Activated CD4-positive, alpha-beta T cell treated with anti-CD3 and anti-CD28 coated beads for 36 hours (primary cell): ENCODE measurements at regions of chr6 and their contacts with region 1.

Region 1: DNA sequence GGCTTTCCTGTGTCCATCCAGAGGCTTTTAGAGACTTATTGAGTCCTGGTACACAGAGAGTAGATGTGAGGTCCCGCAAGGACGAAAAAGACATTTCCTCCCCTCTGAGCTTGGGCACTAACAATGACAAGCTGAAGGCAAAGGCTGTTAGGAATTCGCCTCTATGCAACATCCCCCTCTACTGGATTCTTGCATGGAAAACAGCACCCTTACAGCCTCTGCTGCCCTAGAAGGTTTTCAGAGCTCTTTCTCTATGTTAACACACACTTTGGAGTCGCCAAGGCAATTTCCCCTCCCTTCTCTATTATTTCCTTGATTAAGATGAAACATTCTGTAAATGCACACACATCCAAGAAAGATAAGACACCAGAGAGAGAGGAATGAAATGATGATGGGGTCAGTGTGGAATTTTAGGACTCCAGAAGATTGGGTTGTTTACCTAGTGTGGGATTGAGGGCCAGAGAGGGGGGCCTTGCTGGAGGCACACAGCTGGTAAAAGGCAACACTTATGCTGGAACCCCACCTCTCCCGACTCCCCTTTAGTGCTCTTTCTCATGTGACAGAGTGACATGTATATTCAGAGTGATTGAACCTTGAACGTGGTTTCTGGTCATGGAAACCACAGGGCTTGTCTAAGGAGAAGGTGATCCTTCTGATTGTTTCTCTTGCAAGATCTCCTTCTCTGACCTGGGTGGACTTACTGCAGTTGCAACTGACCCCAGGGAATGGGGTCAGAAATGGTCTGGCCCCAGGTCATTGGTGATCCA is 300.7 kb downstream of the CLIC5 start:
- DNase-seq: peak; percentile 57
- ATAC-seq: peak; percentile 43
- H3K4me3 Mint-ChIP-seq: peak overlapping the region; percentile 24
- H3K27ac Mint-ChIP-seq: peak overlapping the region; percentile 89
- H3K4me1 Mint-ChIP-seq: peaks cover 48% of the 10 kb centered on the region
- H3K27me3 Mint-ChIP-seq: peaks cover 2% of the 10 kb centered on the region

Region 2: GRCh38 chr6:44642870-44643529 is 1071.9 kb before region 1 on chr6:
- CTCF ChIA-PET with region 1: no interaction called
- POLR2A ChIA-PET with region 1: no interaction called
- intact Hi-C with region 1: loop called (anchors 1 to 5 kb)
- DNase-seq: peak; percentile 85
- ATAC-seq: peak; percentile 87
- H3K4me3 Mint-ChIP-seq: peak overlapping the region; percentile 21
- H3K27ac Mint-ChIP-seq: peak overlapping the region; percentile 93
- H3K4me1 Mint-ChIP-seq: peaks cover 38% of the 10 kb centered on the region
- H3K27me3 Mint-ChIP-seq: peaks cover 2% of the 10 kb centered on the region

Region 3: DNA sequence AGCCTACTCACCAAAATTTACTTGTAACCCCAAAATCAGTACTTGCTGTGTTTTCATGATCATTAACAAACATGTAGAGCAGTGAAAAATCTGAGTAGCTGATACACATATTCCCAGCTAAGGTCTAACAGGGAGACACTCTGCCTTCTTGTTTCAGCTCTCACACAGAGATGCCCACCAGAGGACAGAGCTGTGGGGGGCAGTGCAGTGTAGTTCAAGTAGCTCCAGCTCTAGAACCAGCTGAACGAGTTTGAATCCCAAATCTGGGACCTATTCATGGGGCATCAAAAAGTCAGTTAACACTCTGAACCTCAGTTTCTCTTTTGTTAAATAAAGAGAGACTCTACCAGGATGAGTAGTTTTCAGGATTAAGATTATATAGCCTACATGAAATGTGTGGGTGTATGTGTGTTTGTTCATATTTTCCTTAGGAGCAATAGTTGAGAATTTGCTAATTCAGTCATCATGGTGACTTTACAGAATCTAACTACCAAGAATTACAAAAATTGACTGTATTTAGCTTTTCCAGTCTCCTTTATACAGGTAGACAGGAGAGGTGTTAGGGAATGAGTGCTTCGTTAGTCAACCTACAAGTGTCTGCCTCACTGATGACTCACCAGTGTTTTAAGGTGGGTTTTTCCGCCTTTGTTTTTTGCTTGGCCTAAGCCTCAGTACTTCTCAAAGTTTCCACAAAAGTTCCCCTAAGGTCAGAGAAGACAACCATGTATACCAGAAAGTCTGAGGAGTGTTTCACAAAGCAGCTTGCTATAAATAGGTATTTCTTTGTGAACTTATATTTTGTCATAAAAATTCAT is 550.8 kb before region 1 on chr6:
- CTCF ChIA-PET with region 1: no interaction called
- POLR2A ChIA-PET with region 1: no interaction called
- intact Hi-C with region 1: loop called (anchors 1 kb)
- DNase-seq: peak; percentile 61
- ATAC-seq: peak; percentile 92
- H3K4me3 Mint-ChIP-seq: peak overlapping the region; percentile 21
- H3K27ac Mint-ChIP-seq: peak overlapping the region; percentile 93
- H3K4me1 Mint-ChIP-seq: peaks cover 47% of the 10 kb centered on the region
- H3K27me3 Mint-ChIP-seq: no peaks in the 10 kb centered on the region

Region 4: GRCh38 chr6:45479834-45480751 is 234.8 kb before region 1 on chr6:
- CTCF ChIA-PET with region 1: interaction called, 3 read pairs
- POLR2A ChIA-PET with region 1: no interaction called
- intact Hi-C with region 1: loop called in 1 of 2 experiments (anchors 1 kb)
- DNase-seq: peak; percentile 18
- ATAC-seq: peak; percentile 47
- H3K4me3 Mint-ChIP-seq: no peak overlapping the region
- H3K27ac Mint-ChIP-seq: peak overlapping the region; percentile 44
- H3K4me1 Mint-ChIP-seq: peaks cover 34% of the 10 kb centered on the region
- H3K27me3 Mint-ChIP-seq: no peaks in the 10 kb centered on the region

Region 5: DNA sequence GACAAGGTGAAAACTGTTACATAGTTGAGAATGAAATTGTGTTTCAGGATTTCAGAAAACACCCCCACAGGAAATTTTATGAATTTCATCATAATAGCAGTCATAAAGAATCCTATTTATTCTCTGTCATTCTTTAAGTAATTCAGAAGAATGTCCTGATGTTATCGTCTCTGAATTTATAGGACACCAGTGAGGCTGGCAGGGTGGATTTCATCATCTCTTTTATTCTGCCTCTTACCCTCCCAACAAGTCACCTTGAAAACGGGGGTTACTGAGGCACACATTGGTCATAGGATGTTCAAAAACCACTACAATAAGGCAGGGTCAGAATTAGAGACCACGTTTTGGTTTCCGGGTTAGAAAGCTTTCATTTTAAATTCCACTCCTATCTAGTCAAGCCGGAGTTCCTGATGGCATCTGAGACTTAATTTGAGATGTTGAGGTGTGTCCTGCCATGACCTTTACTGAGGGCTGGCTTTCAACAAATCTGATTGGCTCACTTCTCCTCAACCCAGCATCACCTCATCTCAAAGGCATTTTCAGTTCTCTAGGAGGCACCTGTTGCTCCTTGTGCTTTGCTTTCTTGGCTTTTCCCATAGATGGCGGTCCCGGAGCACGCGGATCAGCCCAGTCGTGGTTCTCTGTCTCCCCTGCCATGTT is 106.5 kb before region 1 on chr6:
- CTCF ChIA-PET with region 1: no interaction called
- POLR2A ChIA-PET with region 1: no interaction called
- intact Hi-C with region 1: loop called in 1 of 2 experiments (anchors 1 kb)
- DNase-seq: peak; percentile 27
- ATAC-seq: peak; percentile 88
- H3K4me3 Mint-ChIP-seq: no peak overlapping the region
- H3K27ac Mint-ChIP-seq: peak overlapping the region; percentile 76
- H3K4me1 Mint-ChIP-seq: peaks cover 22% of the 10 kb centered on the region
- H3K27me3 Mint-ChIP-seq: no peaks in the 10 kb centered on the region

Region 6: GRCh38 chr6:45801471-45802289 is 86.8 kb after region 1 on chr6:
- CTCF ChIA-PET with region 1: no interaction called
- POLR2A ChIA-PET with region 1: no interaction called
- intact Hi-C with region 1: loop called (anchors 1 kb)
- DNase-seq: peak; percentile 80
- ATAC-seq: peak; percentile 82
- H3K4me3 Mint-ChIP-seq: no peak overlapping the region
- H3K27ac Mint-ChIP-seq: peak overlapping the region; percentile 72
- H3K4me1 Mint-ChIP-seq: peaks cover 22% of the 10 kb centered on the region
- H3K27me3 Mint-ChIP-seq: peaks cover 2% of the 10 kb centered on the region

Region 7: DNA sequence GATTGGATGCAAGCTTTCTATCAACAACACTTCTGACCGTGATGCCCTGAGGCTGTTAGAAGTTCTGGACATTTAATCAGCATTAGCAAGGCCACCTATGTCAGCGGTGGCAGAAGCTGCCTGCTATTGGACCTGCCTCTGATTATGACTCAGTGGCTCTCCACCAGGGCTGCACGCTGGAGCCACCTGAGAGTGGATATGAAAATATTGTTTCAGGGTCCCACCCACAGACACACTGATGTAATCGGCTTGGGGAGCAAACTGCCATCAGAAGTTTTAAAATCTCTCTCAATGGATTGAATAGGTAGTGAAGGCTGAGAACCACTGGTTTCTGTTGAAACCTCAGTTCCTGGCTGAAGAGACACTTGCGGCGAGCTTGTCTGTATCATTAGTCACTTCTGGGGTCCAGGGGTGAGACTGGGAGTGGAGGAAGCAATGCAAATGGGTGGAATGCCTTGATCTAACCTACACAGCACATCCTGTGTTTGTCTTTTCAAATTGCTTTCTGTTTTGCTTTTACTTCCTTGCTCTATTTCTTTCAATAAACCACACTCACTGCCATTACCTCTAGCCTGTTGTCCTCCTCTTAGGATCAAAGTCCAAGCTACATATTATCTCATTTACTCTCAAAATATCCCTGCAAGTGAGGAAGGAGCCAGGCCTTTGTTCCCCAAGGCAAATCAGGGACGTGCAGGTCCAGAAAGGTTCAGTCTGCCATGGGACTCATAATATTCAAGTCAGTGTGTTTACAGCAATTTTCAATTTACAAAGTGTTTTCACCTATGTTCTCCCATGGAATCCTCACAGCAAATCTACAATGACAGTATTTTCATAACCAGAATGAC is 296.5 kb after region 1 on chr6:
- CTCF ChIA-PET with region 1: interaction called, 3 read pairs
- POLR2A ChIA-PET with region 1: no interaction called
- intact Hi-C with region 1: loop called in 1 of 2 experiments (anchors 5 kb)
- DNase-seq: peak; percentile 74
- ATAC-seq: peak; percentile 86
- H3K4me3 Mint-ChIP-seq: peak overlapping the region; percentile 39
- H3K27ac Mint-ChIP-seq: peak overlapping the region; percentile 58
- H3K4me1 Mint-ChIP-seq: peaks cover 51% of the 10 kb centered on the region
- H3K27me3 Mint-ChIP-seq: peaks cover 1% of the 10 kb centered on the region

Region 8: DNA sequence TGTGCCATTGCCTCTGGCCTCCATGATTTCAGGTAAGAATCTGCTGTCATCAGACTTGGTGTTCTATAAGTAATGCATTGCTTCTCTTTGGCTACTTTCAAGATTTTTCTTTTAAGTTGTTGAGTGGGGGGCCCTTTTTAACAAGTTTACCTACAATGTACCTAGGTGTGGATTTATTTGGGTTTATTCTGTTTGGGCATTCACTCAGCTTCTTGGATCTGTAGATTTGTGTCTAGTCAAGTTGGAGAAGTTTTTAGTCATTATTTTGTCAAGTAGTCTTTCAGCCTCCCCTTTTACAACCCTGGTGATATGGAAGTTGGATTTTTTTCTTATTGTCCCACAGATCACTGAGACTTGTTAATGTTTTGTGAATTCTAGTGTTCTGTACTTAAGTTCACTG is 441.8 kb after region 1 on chr6:
- CTCF ChIA-PET with region 1: no interaction called
- POLR2A ChIA-PET with region 1: no interaction called
- intact Hi-C with region 1: no loop called
- DNase-seq: no peak
- ATAC-seq: no peak
- H3K4me3 Mint-ChIP-seq: no peak overlapping the region
- H3K27ac Mint-ChIP-seq: no peak overlapping the region
- H3K4me1 Mint-ChIP-seq: no peaks in the 10 kb centered on the region
- H3K27me3 Mint-ChIP-seq: peaks cover 3% of the 10 kb centered on the region

Region 9: GRCh38 chr6:47278550-47278949 is 1563.6 kb after region 1 on chr6:
- CTCF ChIA-PET with region 1: no interaction called
- POLR2A ChIA-PET with region 1: no interaction called
- intact Hi-C with region 1: no loop called
- DNase-seq: no peak
- ATAC-seq: no peak
- H3K4me3 Mint-ChIP-seq: no peak overlapping the region
- H3K27ac Mint-ChIP-seq: no peak overlapping the region
- H3K4me1 Mint-ChIP-seq: no peaks in the 10 kb centered on the region
- H3K27me3 Mint-ChIP-seq: peaks cover 1% of the 10 kb centered on the region